ENCODE measurements at regions of chr9 and their contacts with region 1.

Region 1: GRCh38 chr9:21110708-21111576 is 30.7 kb downstream of the IFNW1 start:
- DNase-seq: peak in 1 of 3 donors; percentile 45
- ATAC-seq: peak; percentile 78
- H3K4me3 ChIP-seq: no peak overlapping the region
- H3K4me1 ChIP-seq: no peaks in the 10 kb centered on the region
- CTCF ChIP-seq: peak; percentile 24

Region 2: DNA sequence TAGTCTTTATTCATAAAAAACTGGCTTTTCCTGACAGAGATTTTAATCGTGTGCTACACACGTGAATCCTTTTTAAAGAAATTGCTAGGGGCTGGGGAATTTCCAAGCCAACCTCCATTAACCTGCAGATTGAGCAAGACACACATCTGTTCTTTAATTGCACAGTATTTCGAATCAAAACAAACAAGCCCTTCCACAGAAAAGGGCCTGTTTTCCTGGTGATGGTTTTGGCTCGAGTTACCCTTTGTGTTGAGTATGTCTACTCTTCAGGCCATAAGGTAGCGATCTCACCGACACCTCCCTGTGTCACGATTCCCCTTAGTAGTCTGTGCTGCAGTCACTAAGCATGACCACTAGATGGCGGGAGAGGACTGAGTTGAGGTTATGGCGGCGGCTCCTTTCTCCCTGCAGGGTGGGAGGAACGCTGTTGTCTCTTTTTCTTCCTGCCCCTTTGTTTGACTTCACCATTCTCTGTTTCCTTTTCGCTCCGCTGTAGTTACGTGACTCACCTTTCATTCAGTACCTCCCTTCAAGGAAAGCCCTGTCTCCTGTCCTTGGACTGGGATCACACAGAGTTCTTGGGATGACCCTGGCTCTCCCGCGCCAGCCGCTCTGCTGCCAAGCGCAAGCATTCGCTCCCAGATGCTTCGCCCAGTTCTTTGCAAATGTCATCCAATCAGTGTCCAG is 1185.0 kb before region 1 on chr9:
- intact Hi-C with region 1: loop called (anchors 5 kb)
- DNase-seq: peak; percentile 51 to 67 (median 61)
- ATAC-seq: peak; percentile 98
- H3K4me3 ChIP-seq: no peak overlapping the region
- H3K4me1 ChIP-seq: no peaks in the 10 kb centered on the region
- CTCF ChIP-seq: peak; percentile 88

Region 3: GRCh38 chr9:20950707-20951106 is 160.2 kb before region 1 on chr9:
- intact Hi-C with region 1: loop called in 1 of 2 experiments (anchors 10 kb)
- DNase-seq: no peak
- ATAC-seq: no peak
- H3K4me3 ChIP-seq: no peak overlapping the region
- H3K4me1 ChIP-seq: no peaks in the 10 kb centered on the region
- CTCF ChIP-seq: no peak

Measured in mucosa of descending colon (tissue), 3 donors.